PC-9 (cell line): ENCODE measurements at regions of chr1 and their contacts with region 1.

Region 1: GRCh38 chr1:60833173-60833572 is 249.2 kb upstream of the NFIA start:
- DNase-seq: no peak
- H3K4me3 ChIP-seq: no peak overlapping the region
- H3K27ac ChIP-seq: no peak overlapping the region
- H3K4me1 ChIP-seq: no peaks in the 10 kb centered on the region
- H3K27me3 ChIP-seq: no peaks in the 10 kb centered on the region
- CTCF ChIP-seq: no peak

Region 2: DNA sequence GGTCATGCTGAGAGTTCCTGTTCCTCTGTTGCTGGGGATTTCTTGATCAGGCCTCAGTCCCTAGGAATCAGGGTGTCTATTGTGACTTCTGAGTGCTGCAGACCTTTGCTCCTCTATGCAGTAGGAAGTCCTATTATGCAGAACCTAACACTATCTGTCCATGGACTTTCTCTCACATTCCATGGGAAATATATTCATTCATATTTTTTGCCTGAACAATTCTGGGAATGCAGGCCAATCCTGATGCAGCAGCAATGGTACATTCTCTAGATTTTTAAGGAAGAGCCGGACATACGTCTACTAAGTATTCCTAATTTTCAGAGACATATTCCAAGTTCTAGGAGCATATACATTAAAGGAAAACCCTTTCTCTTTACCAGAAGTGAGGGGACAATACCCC is 698.5 kb before region 1 on chr1:
- CTCF ChIA-PET with region 1: no interaction called
- POLR2A ChIA-PET with region 1: interaction called, 18 read pairs
- intact Hi-C with region 1: no loop called
- DNase-seq: no peak
- H3K4me3 ChIP-seq: no peak overlapping the region
- H3K27ac ChIP-seq: no peak overlapping the region
- H3K4me1 ChIP-seq: no peaks in the 10 kb centered on the region
- H3K27me3 ChIP-seq: no peaks in the 10 kb centered on the region
- CTCF ChIP-seq: no peak

Region 3: GRCh38 chr1:60461925-60462595 is 371.1 kb before region 1 on chr1:
- CTCF ChIA-PET with region 1: no interaction called
- POLR2A ChIA-PET with region 1: no interaction called
- intact Hi-C with region 1: no loop called
- DNase-seq: no peak
- H3K4me3 ChIP-seq: no peak overlapping the region
- H3K27ac ChIP-seq: no peak overlapping the region
- H3K4me1 ChIP-seq: no peaks in the 10 kb centered on the region
- H3K27me3 ChIP-seq: no peaks in the 10 kb centered on the region
- CTCF ChIP-seq: no peak

Region 4: DNA sequence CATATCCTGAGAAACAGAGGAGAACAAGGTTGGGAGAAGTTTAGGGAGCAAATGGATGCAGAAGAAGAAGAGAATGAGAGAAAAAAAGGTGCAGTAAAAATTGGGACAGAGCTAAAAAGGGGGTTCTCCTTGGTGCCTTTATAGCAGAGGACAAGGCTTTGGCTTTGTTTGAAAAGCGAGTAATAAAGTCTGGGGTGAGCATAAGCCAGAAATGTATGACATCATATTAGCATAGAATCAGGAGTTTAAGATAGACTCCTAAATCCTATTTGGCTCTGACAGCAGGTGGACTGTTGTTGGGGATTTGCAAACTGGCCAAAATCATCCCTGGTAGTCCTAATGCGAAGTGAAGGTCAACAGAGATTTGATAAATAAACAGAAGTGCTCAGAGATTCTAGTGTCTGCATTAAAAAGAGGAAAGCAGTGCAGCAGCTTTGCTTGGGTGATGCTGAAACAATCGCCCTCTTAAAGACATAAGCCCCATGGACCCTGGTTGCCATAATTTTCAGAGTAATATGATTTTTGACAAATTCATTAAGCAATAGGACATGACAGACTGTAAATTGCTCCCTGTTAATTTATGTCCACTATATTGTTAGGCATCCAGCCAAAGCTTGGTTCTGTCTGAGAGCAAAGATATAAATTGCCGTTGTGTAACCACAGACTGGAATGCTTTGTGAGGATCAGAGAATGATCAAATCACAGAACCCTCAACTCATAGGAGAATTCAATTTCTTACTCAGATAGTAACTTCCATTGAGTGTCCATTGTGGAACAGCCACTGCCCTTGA is 135.8 kb before region 1 on chr1:
- CTCF ChIA-PET with region 1: no interaction called
- POLR2A ChIA-PET with region 1: no interaction called
- intact Hi-C with region 1: no loop called
- DNase-seq: no peak
- H3K4me3 ChIP-seq: no peak overlapping the region
- H3K27ac ChIP-seq: no peak overlapping the region
- H3K4me1 ChIP-seq: no peaks in the 10 kb centered on the region
- H3K27me3 ChIP-seq: no peaks in the 10 kb centered on the region
- CTCF ChIP-seq: no peak

Region 5: DNA sequence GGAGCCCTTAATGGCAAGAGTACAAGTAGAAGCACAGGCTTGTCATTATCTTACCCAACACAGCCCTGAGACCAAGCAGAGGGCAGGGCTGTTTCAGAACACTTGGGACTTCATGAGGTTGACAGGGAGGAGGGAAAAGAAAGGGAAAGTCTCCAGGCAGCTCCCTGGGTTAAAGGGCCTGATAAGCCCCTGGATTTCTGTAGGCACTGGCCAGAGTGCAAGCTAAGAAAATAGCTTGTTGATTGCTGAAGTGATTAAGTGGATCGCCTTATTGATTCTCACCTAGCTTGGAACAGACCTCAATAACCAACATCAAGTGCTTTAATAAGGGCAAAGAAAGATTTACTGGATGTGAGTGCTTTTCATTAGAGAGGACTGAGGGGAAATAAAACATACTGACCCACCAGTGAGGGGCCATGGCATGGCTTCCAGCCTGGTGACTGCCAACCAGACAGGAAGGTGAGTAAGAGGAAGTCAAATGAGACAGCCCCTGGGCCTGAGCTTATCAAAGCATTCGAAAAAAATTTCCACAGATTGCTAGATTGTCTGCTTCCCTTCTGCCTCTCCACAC is 127.8 kb after region 1 on chr1:
- CTCF ChIA-PET with region 1: no interaction called
- POLR2A ChIA-PET with region 1: no interaction called
- intact Hi-C with region 1: no loop called
- DNase-seq: no peak
- H3K4me3 ChIP-seq: no peak overlapping the region
- H3K27ac ChIP-seq: no peak overlapping the region
- H3K4me1 ChIP-seq: peaks cover 4% of the 10 kb centered on the region; the same call in 1 of the 2 replicates
- H3K27me3 ChIP-seq: no peaks in the 10 kb centered on the region
- CTCF ChIP-seq: no peak